Activated T-helper 1 cell treated with anti-CD3 and anti-CD28 coated beads, Interleukin-12 subunit alpha, Interleukin-12 subunit beta, Interleukin-2, Interleukin-4 antibody, amounts not matched to agents 30 ng/mL and 10 ng/mL and 1 ng/mL, durations not matched to agents 14 hours and 24 hours and 36 hours (primary cell): ENCODE measurements at regions of chr1 and their contacts with region 1.

Region 1: GRCh38 chr1:162951553-162952315 is 90.8 kb upstream of the CCDC190 start:
- DNase-seq: no peak
- H3K4me3 Mint-ChIP-seq: no peak overlapping the region
- H3K27ac Mint-ChIP-seq: peak overlapping the region; percentile 52
- H3K4me1 Mint-ChIP-seq: peaks cover 6% of the 10 kb centered on the region
- H3K27me3 Mint-ChIP-seq: peaks cover 6% of the 10 kb centered on the region

Region 2: DNA sequence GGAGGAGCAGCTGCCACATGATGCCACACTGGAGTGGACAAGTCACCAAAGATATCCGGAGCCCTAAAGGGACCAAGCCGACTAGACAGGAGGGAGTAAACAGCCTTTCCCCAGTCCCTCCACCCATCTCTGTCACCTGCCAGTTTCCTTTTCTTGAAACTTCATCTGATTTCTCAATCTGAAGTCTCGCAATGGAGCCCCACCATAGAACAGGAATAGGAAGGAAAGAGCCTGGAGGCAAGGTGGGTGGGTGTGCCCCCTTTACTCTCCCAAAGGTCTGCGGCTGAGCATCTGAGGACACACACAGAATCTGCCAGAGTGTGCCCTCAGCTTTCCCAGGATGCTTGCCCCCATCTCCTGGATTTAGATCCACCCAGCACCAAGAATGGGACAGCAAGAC is 1320.7 kb before region 1 on chr1 and contains the start of gene FCGR3B:
- intact Hi-C with region 1: no loop called
- DNase-seq: no peak
- H3K4me3 Mint-ChIP-seq: no peak within 1 kb of the TSS
- H3K27ac Mint-ChIP-seq: no peak within 1 kb of the TSS
- H3K4me1 Mint-ChIP-seq: peaks cover 8% of the 10 kb centered on the region
- H3K27me3 Mint-ChIP-seq: no peaks in the 10 kb centered on the region
- total RNA-seq, gene FCGR3B: not detected in 2 replicates

Region 3: DNA sequence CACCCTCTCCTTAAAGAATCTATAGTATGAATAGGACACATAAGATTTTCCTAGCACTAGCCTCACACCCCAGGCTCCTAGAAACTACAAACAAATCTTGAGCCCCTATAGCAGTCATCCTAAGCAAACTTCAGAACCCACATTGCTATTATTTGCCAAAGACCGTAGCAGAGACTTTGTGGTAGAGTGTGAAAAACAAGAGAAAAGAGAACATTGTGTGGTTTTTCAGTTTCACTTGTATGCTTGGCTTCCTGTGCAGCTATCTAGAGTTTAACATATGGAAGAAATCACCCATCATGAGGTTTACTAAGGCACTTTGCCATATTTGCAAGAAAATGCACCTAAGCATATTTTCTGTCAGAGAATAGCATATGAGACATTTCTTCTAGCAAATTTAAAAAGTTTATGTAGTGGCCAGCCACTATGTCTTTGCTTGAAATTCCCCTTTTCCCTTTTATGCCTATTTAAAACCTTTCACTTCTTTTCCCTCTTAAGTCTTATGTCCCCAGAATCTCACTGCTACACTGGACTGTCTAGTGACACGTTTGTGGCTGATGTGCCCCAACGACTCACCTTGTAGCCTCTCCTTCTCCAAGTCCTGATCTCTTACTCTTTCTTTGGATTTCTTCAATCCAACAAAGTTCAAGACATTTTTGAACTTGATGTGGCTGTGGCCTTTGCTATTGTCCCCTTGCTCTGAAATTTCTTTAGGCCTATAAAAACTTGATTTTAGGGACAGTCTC is 116.4 kb before region 1 on chr1:
- intact Hi-C with region 1: loop called (anchors 5 kb)
- DNase-seq: peak; percentile 6
- H3K4me3 Mint-ChIP-seq: peak overlapping the region; percentile 41
- H3K27ac Mint-ChIP-seq: peak overlapping the region; percentile 55
- H3K4me1 Mint-ChIP-seq: peaks cover 19% of the 10 kb centered on the region
- H3K27me3 Mint-ChIP-seq: peaks cover 11% of the 10 kb centered on the region

Region 4: GRCh38 chr1:162922201-162922600 is 29.5 kb before region 1 on chr1:
- intact Hi-C with region 1: no loop called
- DNase-seq: no peak
- H3K4me3 Mint-ChIP-seq: no peak overlapping the region
- H3K27ac Mint-ChIP-seq: no peak overlapping the region
- H3K4me1 Mint-ChIP-seq: no peaks in the 10 kb centered on the region
- H3K27me3 Mint-ChIP-seq: peaks cover 7% of the 10 kb centered on the region

Region 5: GRCh38 chr1:164473544-164473943 is 1521.8 kb after region 1 on chr1:
- intact Hi-C with region 1: no loop called
- DNase-seq: no peak
- H3K4me3 Mint-ChIP-seq: no peak overlapping the region
- H3K27ac Mint-ChIP-seq: no peak overlapping the region
- H3K4me1 Mint-ChIP-seq: no peaks in the 10 kb centered on the region
- H3K27me3 Mint-ChIP-seq: no peaks in the 10 kb centered on the region